ENCODE measurements at regions of chr14 and their contacts with region 1.

Region 1: GRCh38 chr14:102694530-102695166 is 82.6 kb upstream of the TRAF3 start:
- DNase-seq: peak; percentile 77
- ATAC-seq: peak; percentile 82
- H3K4me3 Mint-ChIP-seq: no peak overlapping the region
- H3K27ac Mint-ChIP-seq: no peak overlapping the region
- H3K4me1 Mint-ChIP-seq: peaks cover 22% of the 10 kb centered on the region
- H3K27me3 Mint-ChIP-seq: no peaks in the 10 kb centered on the region
- CTCF ChIP-seq: peak; percentile 81

Region 2: GRCh38 chr14:102591889-102592763 is 102.5 kb before region 1 on chr14 and contains the start of gene RCOR1:
- CTCF ChIA-PET with region 1: interaction called, 27 read pairs
- POLR2A ChIA-PET with region 1: no interaction called
- intact Hi-C with region 1: no loop called
- DNase-seq: peak; percentile 98
- ATAC-seq: peak; percentile 93
- H3K4me3 Mint-ChIP-seq: peak within 1 kb of the TSS; percentile 79
- H3K27ac Mint-ChIP-seq: peak within 1 kb of the TSS; percentile 95
- H3K4me1 Mint-ChIP-seq: peaks cover 29% of the 10 kb centered on the region
- H3K27me3 Mint-ChIP-seq: no peaks in the 10 kb centered on the region
- CTCF ChIP-seq: no peak
- total RNA-seq, gene RCOR1: 16.1 to 16.2 TPM

Region 3: DNA sequence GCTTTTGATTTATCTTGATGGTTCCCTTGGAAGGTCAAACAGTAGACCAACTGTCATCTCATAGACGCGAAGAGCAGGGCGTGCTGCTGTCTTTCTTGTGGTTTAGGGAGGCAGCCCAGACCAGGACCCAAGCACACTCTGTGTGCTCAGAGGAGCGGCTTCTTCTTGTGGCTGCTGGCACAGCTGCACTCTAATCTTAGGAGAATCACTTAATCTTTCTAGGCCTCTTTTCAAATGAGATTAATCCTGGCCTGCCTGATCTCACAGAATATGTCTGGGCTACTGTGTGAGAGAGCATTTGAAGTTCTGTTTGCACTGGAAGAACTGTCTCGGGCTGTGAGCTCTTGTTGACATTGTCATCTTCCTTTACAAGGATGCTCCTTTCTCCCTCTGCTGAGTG is 22.6 kb after region 1 on chr14:
- CTCF ChIA-PET with region 1: interaction called, 13 read pairs
- POLR2A ChIA-PET with region 1: no interaction called
- intact Hi-C with region 1: no loop called
- DNase-seq: no peak
- ATAC-seq: no peak
- H3K4me3 Mint-ChIP-seq: no peak overlapping the region
- H3K27ac Mint-ChIP-seq: no peak overlapping the region
- H3K4me1 Mint-ChIP-seq: peaks cover 7% of the 10 kb centered on the region
- H3K27me3 Mint-ChIP-seq: no peaks in the 10 kb centered on the region
- CTCF ChIP-seq: no peak

Region 4: GRCh38 chr14:102917469-102918211 is 223.0 kb after region 1 on chr14:
- CTCF ChIA-PET with region 1: interaction called, 25 read pairs
- POLR2A ChIA-PET with region 1: no interaction called
- intact Hi-C with region 1: loop called (anchors 5 kb)
- DNase-seq: peak; percentile 87
- ATAC-seq: peak; percentile 76
- H3K4me3 Mint-ChIP-seq: no peak overlapping the region
- H3K27ac Mint-ChIP-seq: peak overlapping the region; percentile 50
- H3K4me1 Mint-ChIP-seq: no peaks in the 10 kb centered on the region
- H3K27me3 Mint-ChIP-seq: no peaks in the 10 kb centered on the region
- CTCF ChIP-seq: peak; percentile 64

Region 5: GRCh38 chr14:103091041-103091882 is 396.6 kb after region 1 on chr14:
- CTCF ChIA-PET with region 1: interaction called, 3 read pairs
- POLR2A ChIA-PET with region 1: no interaction called
- intact Hi-C with region 1: loop called (anchors 10 kb)
- DNase-seq: peak; percentile 84
- ATAC-seq: peak; percentile 97
- H3K4me3 Mint-ChIP-seq: peak overlapping the region; percentile 43
- H3K27ac Mint-ChIP-seq: no peak overlapping the region
- H3K4me1 Mint-ChIP-seq: peaks cover 4% of the 10 kb centered on the region
- H3K27me3 Mint-ChIP-seq: peaks cover 5% of the 10 kb centered on the region
- CTCF ChIP-seq: peak; percentile 75

Measured in activated CD8-positive, alpha-beta T cell treated with anti-CD3 and anti-CD28 coated beads for 36 hours (primary cell).